ENCODE measurements at regions of chr16 and their contacts with region 1.

Region 1: DNA sequence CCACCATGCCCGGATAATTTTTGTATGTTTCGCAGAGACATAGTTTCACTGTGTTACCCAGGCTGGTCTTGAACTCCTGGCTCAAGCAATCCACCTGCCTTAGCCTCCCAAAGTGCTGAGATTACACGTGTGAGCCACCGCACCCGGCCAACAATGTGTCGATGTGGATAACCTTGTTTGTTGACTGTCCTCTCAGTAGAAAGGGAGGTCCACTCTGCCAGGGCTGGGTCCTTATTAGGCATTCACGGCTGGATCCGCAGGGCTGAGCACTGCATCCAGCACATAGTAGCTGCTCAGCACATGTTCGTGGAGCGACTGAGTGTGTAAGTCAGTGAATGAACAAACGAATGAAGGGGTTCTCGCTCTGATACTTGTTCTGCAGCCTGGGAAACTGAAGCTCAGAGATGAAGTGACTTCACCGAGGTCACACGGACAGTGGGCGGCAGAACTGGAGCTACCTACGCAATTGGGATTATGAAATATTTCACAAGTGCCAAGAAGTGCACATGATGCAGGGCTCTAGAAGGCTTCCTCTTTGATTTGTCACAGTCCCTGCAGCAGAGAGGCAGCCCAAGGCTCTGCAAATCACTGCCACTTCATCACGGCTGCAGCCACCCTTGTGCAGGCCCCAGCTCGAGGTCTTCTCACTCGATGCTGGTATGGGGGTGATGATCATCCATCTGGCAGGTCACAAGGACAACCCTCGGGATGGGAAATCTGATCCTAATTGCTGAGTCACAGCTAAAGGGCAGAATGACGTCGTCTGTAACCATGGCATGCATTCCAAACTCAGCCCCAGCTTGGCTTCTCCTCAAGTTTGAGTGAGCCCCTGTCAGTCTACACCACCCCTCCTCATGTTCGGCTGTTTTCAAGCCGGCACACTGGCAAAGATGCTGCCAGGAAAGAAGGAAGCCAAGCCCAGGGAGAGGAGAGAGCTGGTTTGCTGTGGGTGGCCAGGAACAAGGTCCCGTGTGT is 28.0 kb upstream of the SNN start:
- DNase-seq: no peak
- ATAC-seq: no peak
- H3K4me3 Mint-ChIP-seq: no peak overlapping the region
- H3K27ac Mint-ChIP-seq: no peak overlapping the region; the same call in 1 of the 2 replicates
- H3K4me1 Mint-ChIP-seq: peaks cover 30% of the 10 kb centered on the region
- H3K27me3 Mint-ChIP-seq: peaks cover 6% of the 10 kb centered on the region; the same call in 1 of the 2 replicates
- CTCF ChIP-seq: no peak

Region 2: GRCh38 chr16:11386791-11387546 is 253.2 kb before region 1 on chr16:
- CTCF ChIA-PET with region 1: interaction called, 10 read pairs
- POLR2A ChIA-PET with region 1: interaction called, 6 read pairs
- DNase-seq: peak; percentile 86
- ATAC-seq: peak; percentile 85
- H3K4me3 Mint-ChIP-seq: no peak overlapping the region
- H3K27ac Mint-ChIP-seq: no peak overlapping the region; the same call in 1 of the 2 replicates
- H3K4me1 Mint-ChIP-seq: peaks cover 31% of the 10 kb centered on the region
- H3K27me3 Mint-ChIP-seq: peaks cover 2% of the 10 kb centered on the region; the same call in 1 of the 2 replicates
- CTCF ChIP-seq: peak; percentile 59; the same call in 1 of the 2 replicates

Region 3: DNA sequence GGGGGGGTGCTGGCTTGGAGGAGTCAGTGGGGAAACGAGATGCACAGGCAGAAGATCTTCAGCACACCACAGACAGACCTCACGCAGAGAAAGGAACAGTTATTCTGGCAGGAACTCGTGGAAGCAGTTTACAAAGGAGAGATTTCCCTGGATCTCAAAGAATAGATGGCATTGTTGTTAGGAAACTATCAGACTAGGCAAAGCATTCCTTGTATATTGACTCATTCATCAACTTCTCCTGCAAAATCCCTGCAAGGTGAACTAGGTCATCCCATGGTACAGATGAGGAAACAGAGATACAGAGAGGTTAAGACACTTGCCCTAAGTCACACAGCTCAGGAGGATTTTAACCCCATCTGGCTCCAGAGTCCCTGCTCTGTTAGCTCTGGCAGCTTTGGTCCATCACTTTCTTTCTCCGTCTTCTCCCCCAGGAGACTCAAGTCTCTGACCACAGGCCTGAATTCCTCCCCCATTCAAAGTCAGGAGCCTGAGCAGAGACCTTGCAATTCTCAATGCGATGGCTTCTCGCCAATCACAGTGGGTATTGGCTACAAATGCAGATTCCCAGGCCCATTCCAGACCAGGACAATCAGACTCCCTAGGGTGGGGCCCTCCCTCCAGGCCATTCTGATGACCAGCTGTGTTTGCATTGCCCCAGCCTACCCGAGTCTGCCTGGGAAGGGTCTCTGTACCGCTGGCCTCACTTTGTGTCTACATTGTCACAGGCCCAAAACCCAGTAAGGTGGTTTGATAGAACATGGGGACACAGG is 109.9 kb before region 1 on chr16:
- CTCF ChIA-PET with region 1: interaction called, 28 read pairs
- POLR2A ChIA-PET with region 1: interaction called, 3 read pairs
- DNase-seq: no peak
- ATAC-seq: no peak
- H3K4me3 Mint-ChIP-seq: no peak overlapping the region
- H3K27ac Mint-ChIP-seq: peak overlapping the region; percentile 55; the same call in 1 of the 2 replicates
- H3K4me1 Mint-ChIP-seq: peaks cover 13% of the 10 kb centered on the region; the same call in 1 of the 2 replicates
- H3K27me3 Mint-ChIP-seq: no peaks in the 10 kb centered on the region
- CTCF ChIP-seq: no peak

Region 4: GRCh38 chr16:11586856-11587642 is 53.2 kb before region 1 on chr16 and contains the start of gene LITAF:
- CTCF ChIA-PET with region 1: interaction called, 10 read pairs
- POLR2A ChIA-PET with region 1: interaction called, 10 read pairs
- DNase-seq: peak; percentile 59
- ATAC-seq: peak; percentile 67
- H3K4me3 Mint-ChIP-seq: peak within 1 kb of the TSS; percentile 81
- H3K27ac Mint-ChIP-seq: peak within 1 kb of the TSS; percentile 92
- H3K4me1 Mint-ChIP-seq: peaks cover 38% of the 10 kb centered on the region
- H3K27me3 Mint-ChIP-seq: peaks cover 61% of the 10 kb centered on the region
- CTCF ChIP-seq: no peak
- total RNA-seq, gene LITAF: 72.4 to 77.7 TPM (median 73.0 TPM) in 3 replicates

Region 5: DNA sequence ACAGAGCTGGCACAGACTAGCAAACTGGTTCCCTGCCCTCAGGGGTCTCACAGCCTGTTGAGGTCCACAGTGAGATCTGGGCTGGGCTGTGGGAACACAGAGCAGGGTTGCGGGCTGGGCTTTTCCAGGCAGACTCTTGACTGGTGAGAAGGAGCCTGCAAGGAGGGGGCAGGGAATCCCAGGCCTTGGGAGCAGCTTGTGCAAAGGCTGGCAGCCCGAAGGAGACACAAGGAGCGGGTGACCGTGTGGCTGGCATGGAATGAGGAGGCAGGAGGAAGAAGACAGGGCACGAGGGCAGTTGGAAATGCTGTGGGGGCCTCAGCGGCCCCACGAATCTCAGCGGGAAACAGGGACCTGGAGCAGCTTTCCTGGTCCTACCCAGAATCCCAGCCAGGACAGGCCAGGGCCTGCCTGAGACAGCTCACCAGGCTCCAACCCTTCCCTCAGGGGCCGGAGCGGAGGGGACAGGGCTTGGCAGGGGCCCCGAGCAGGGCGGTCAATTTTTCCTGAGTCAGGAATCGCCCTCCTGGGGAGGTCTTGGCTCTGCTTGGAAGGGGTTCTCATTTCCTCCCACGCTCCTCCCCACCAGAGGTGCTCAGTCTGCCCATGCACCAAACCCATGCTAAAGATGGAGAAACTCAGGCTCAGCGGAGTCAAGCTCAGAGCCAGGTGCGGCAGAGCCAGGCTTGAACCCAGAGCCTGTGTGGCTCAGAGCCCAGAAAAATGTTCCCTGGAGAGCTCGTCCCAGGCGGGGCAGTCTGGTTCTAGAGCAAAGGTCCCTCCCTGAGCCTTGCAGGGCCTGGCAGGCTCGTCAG is 18.9 kb after region 1 on chr16:
- CTCF ChIA-PET with region 1: interaction called, 10 read pairs
- POLR2A ChIA-PET with region 1: no interaction called
- DNase-seq: no peak
- ATAC-seq: peak; percentile 55
- H3K4me3 Mint-ChIP-seq: no peak overlapping the region
- H3K27ac Mint-ChIP-seq: peak overlapping the region; percentile 50; the same call in 1 of the 2 replicates
- H3K4me1 Mint-ChIP-seq: peaks cover 11% of the 10 kb centered on the region
- H3K27me3 Mint-ChIP-seq: no peaks in the 10 kb centered on the region
- CTCF ChIP-seq: no peak

Region 6: GRCh38 chr16:11667824-11668622 is 27.8 kb after region 1 on chr16 and contains the start of gene SNN:
- CTCF ChIA-PET with region 1: interaction called, 22 read pairs
- POLR2A ChIA-PET with region 1: interaction called, 8 read pairs
- DNase-seq: peak; percentile 85
- ATAC-seq: peak; percentile 81
- H3K4me3 Mint-ChIP-seq: peak within 1 kb of the TSS; percentile 70
- H3K27ac Mint-ChIP-seq: no peak within 1 kb of the TSS
- H3K4me1 Mint-ChIP-seq: peaks cover 66% of the 10 kb centered on the region
- H3K27me3 Mint-ChIP-seq: peaks cover 3% of the 10 kb centered on the region; the same call in 1 of the 2 replicates
- CTCF ChIP-seq: no peak
- total RNA-seq, gene SNN: 54.2 to 65.2 TPM (median 56.2 TPM) in 3 replicates

Region 7: GRCh38 chr16:11742539-11743307 is 102.5 kb after region 1 on chr16 and contains the start of gene TXNDC11:
- CTCF ChIA-PET with region 1: no interaction called
- POLR2A ChIA-PET with region 1: no interaction called
- DNase-seq: peak; percentile 97
- ATAC-seq: peak; percentile 96
- H3K4me3 Mint-ChIP-seq: peak within 1 kb of the TSS; percentile 93
- H3K27ac Mint-ChIP-seq: peak within 1 kb of the TSS; percentile 93
- H3K4me1 Mint-ChIP-seq: peaks cover 21% of the 10 kb centered on the region
- H3K27me3 Mint-ChIP-seq: no peaks in the 10 kb centered on the region
- CTCF ChIP-seq: no peak
- total RNA-seq, gene TXNDC11: 11.1 to 11.5 TPM (median 11.4 TPM) in 3 replicates